Gastrocnemius medialis (tissue), 4 donors: ENCODE measurements at regions of chr20 and their contacts with region 1.

Region 1: DNA sequence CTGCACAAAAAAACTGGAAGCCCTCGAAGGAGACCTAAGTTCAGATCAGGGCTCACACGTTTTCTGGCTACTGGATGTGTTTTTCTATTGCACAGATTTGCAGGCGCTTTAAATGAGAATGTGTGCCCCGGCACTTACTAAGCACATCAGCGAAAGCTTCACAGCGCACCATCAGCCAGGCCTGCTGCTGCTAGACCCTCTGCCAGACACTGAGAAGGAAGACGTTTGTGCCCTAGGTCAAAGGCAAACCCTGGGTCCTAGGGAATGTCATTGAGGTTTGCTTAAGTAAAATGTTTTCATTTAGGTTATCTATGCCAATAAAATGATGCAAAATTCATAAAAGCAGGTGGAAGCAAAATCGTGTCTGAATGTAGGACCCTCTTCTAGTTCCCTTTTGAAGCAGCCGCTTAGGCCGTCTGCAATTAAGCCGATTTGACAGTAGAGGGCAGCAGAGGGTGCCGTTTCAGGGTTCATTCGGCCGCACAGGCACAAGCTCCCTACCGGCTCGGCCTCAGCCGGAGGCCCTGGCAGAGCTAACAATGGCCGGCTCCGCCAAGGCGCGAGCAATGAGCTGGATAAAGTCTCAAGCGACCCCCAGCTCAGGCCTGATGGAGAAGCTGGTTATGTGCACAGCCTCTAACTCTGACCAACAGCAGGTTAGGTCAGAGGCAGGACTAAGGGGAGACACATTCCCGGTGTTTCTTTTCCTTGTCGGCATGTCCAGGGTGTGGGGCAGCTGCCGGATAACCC is 107.2 kb upstream of the FOXA2 start:
- DNase-seq: peak; percentile 41 to 58
- ATAC-seq: peak; percentile 88 to 90
- H3K4me3 ChIP-seq: peak overlapping the region; percentile 15 to 48 (median 37)
- H3K27ac ChIP-seq: no peak overlapping the region
- H3K4me1 ChIP-seq: peaks cover 6 to 12% of the 10 kb centered on the region in 2 donors
- H3K27me3 ChIP-seq: no peaks in the 10 kb centered on the region
- CTCF ChIP-seq: peak; percentile 83 to 93 (median 89)
- POLR2A ChIP-seq: no peak

Region 2: GRCh38 chr20:22740828-22741227 is 49.3 kb after region 1 on chr20:
- in situ Hi-C with region 1: no loop called
- intact Hi-C with region 1: no loop called
- DNase-seq: no peak
- ATAC-seq: no peak
- H3K4me3 ChIP-seq: no peak overlapping the region
- H3K27ac ChIP-seq: no peak overlapping the region
- H3K4me1 ChIP-seq: no peaks in the 10 kb centered on the region
- H3K27me3 ChIP-seq: no peaks in the 10 kb centered on the region
- CTCF ChIP-seq: no peak
- POLR2A ChIP-seq: no peak

Region 3: DNA sequence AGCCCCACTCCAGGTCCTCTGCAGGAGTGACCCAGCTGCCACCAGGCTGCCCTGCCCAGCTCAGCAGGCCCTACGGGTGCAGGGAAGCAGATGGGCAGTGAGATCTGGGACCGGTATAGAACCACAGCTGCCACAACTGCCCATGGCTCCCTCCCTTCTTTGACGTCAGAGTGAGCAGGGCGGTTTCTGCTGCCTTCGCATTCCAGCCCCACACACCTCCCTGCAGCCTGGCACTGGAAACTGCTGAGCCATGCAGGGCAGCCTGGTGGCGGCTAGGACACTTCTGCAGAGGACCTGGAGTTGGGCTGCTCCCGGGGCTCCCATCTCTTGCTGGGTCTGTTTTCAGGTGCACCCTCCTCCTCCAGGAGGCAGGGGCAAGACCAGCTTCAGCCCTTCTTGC is 496.2 kb after region 1 on chr20:
- in situ Hi-C with region 1: no loop called
- intact Hi-C with region 1: loop called (anchors 5 kb)
- DNase-seq: peak in 1 of 2 donors; percentile 73
- ATAC-seq: peak in 1 of 2 donors; percentile 97
- H3K4me3 ChIP-seq: no peak overlapping the region
- H3K27ac ChIP-seq: no peak overlapping the region
- H3K4me1 ChIP-seq: no peaks in the 10 kb centered on the region
- H3K27me3 ChIP-seq: no peaks in the 10 kb centered on the region
- CTCF ChIP-seq: no peak
- POLR2A ChIP-seq: no peak

Region 4: DNA sequence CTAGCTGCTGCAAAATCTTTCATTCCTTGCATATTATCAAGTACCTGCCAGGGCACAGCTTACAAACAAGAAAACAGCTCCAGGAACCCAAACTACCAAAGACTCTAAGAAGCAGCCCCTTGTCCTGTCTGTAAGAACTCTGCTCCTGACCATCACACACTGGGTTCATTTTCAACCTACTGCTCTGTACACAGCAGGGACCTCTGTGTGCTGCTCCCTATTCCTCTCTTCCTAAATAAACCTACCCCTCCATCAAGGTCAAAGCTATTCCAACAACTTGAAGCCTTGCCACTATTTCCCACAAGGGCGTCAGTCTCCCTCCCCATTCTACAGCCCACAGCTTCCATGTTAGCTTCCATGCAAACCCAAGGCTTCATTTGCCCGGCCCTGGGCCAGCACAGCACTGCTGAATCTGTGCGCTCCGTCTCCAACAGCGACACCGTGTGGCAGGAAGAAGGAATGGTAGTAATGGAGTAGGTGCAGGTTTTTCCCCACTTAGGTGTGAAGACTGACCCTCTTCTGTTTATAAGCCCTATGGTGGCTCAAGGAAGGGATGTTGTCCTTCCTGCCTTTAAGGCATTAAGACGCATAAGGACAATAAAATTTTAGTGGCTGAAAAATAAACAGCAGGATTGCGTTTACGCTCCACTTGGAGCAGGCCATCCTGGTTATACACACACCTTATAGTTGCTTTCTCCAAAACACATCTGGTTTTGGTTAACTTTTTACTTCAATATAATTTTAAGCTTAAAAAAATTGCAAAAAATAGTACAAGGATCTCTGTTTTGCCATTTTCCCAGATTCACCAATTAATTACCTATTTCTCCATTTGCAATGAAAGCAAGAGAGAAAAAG is 543.9 kb after region 1 on chr20:
- in situ Hi-C with region 1: loop called in 2 of 4 experiments (anchors 25 kb)
- intact Hi-C with region 1: loop called (anchors 1 kb)
- DNase-seq: peak; percentile 26 to 52
- ATAC-seq: peak; percentile 69 to 93
- H3K4me3 ChIP-seq: no peak overlapping the region
- H3K27ac ChIP-seq: no peak overlapping the region
- H3K4me1 ChIP-seq: no peaks in the 10 kb centered on the region
- H3K27me3 ChIP-seq: no peaks in the 10 kb centered on the region
- CTCF ChIP-seq: peak; percentile 64 to 82 (median 76)
- POLR2A ChIP-seq: no peak

Region 5: GRCh38 chr20:23331450-23332350 is 640.2 kb after region 1 on chr20:
- in situ Hi-C with region 1: loop called (anchors 5 to 10 kb)
- intact Hi-C with region 1: no loop called
- DNase-seq: no peak
- ATAC-seq: no peak
- H3K4me3 ChIP-seq: no peak overlapping the region
- H3K27ac ChIP-seq: no peak overlapping the region
- H3K4me1 ChIP-seq: no peaks in the 10 kb centered on the region
- H3K27me3 ChIP-seq: no peaks in the 10 kb centered on the region
- CTCF ChIP-seq: no peak
- POLR2A ChIP-seq: no peak

Region 6: GRCh38 chr20:23441850-23442313 is 750.3 kb after region 1 on chr20:
- in situ Hi-C with region 1: loop called in 1 of 4 experiments (anchors 25 kb)
- intact Hi-C with region 1: no loop called
- DNase-seq: peak; percentile 35 to 51
- ATAC-seq: peak; percentile 75 to 87
- H3K4me3 ChIP-seq: no peak overlapping the region
- H3K27ac ChIP-seq: no peak overlapping the region
- H3K4me1 ChIP-seq: no peaks in the 10 kb centered on the region
- H3K27me3 ChIP-seq: no peaks in the 10 kb centered on the region
- CTCF ChIP-seq: peak; percentile 54 to 83 (median 71)
- POLR2A ChIP-seq: no peak